Psoas muscle (tissue), 8 donors: ENCODE measurements at regions of chr3 and their contacts with region 1.

Region 1: DNA sequence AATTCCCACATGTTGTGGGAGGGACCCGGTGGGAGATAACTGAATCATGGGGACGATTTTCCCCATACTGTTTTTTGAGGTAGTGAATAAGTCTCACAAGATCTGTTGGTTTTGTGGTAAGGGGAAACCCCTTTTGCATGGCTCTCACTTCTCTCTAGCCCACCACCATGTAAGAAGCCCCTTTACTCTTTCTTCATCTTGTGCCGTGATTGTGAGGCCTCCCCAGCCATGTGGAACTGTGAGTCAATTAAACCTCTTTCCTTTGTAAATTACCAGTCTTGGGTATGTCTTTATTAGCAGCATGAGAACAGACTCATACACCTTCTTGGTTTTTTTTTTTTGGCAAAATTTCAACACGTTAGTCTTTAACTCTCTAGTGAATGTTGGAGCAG is 18.1 kb downstream of the ARL8B start:
- DNase-seq: no peak
- ATAC-seq: no peak
- H3K4me3 ChIP-seq: no peak overlapping the region
- H3K27ac ChIP-seq: peak overlapping the region; percentile 61
- H3K4me1 ChIP-seq: peaks cover 74% of the 10 kb centered on the region
- H3K27me3 ChIP-seq: no peaks in the 10 kb centered on the region
- CTCF ChIP-seq: no peak

Region 2: DNA sequence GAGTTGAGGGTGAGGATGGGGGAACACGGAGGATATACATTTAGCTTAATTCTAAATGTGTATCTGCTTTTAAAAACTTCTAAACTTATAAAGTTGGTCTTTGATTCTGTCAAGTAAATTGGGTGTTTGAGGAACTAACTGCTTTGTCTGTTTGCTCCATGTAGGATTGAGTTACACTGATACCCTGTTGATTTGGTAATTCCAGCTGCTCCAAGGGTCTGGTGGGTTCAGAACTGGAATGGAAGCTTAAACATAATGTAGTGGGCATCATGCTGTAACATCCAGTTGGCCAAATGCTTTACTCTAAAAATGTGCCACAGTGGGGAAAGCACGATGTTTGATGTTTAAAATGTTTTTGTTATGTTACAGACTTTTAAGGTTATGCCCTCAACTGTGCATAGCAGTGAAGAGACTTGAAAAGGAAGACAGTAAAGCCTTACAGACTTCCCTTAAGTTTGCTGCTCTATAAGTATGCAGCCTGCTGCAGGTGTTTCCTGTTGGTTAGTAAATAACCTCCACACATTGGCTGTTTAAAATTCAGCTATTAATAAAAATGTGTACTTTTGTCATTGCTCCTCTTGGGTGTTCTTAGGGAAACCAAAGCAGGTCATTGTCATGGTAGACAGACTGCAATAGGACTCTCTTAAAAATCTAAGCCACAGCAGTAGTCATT is 41.4 kb after region 1 on chr3:
- intact Hi-C with region 1: loop called (anchors 5 kb)
- DNase-seq: no peak
- ATAC-seq: no peak
- H3K4me3 ChIP-seq: no peak overlapping the region
- H3K27ac ChIP-seq: no peak overlapping the region
- H3K4me1 ChIP-seq: peaks cover 8% of the 10 kb centered on the region
- H3K27me3 ChIP-seq: no peaks in the 10 kb centered on the region
- CTCF ChIP-seq: no peak

Region 3: DNA sequence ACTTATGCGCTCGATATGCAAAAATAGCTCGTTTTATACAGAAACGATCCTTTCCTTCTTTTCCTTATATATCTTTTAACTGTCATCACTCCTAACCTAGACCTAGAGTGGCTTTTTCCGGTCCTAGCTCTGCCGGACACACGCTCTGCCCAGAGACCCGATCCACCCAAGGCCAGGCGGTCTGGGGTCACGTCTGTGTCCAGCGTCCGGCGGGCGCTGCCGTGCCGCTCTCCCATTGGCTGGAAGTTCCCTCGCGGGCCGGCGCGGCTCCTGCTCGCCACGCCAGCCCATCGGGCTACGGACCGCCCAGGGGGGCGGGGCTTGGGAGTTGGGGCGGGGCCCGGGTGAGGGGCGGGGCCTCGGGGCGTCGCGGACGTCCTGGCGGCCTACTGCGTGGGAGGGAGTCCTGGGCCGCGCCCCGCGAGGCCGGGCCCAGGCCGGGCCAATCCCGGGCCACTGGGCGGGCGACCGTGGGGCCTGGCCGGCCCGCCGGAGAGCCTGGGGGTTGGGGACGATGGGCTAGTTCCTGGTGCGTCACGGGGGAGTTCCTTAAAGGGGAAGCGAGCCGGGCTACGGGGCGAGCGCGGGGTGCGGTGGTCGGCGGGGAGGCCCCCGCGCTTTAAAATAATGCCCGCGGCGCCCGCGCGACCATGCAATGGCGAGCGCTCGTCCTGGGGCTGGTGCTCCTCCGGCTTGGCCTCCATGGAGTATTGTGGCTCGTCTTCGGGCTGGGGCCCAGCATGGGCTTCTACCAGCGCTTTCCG is 47.1 kb after region 1 on chr3 and contains the start of gene EDEM1:
- intact Hi-C with region 1: loop called in 1 of 2 experiments (anchors 5 kb)
- DNase-seq: peak; percentile 95 to 97
- ATAC-seq: peak; percentile 93 to 97 (median 96)
- H3K4me3 ChIP-seq: peak within 1 kb of the TSS; percentile 92
- H3K27ac ChIP-seq: peak within 1 kb of the TSS; percentile 94
- H3K4me1 ChIP-seq: peaks cover 27% of the 10 kb centered on the region
- H3K27me3 ChIP-seq: no peaks in the 10 kb centered on the region
- CTCF ChIP-seq: no peak
- total RNA-seq, gene EDEM1: 5.5 to 11.7 (median 6.5) TPM